ENCODE measurements at regions of chr3 and their contacts with region 1.

Region 1: DNA sequence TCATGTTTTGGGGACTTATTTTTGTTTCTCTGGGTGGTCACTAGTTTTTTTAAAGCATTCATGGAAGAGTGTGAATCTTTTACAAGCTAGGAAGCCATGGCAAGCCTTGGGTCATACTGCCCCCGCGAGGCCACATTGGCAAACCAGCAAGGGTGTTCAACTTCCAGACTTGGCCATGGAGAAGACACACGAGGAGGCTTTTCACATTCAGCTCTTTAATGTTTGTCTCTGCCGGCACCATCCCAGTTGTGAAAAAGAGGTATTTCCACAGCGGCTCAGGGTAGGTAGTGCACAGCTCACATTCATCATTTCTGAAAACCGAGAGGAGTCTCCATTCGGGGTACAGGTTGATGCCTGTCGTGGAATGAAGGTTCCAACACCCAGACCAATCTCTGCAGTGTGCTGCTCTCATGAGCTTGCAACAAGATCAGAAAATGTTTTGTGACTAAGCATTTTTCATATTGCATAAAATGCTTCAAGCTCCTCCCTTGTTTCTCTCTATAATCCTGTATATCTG is 7.7 kb downstream of the CCR5 start:
- DNase-seq: no peak
- H3K4me3 ChIP-seq: no peak overlapping the region
- H3K27ac ChIP-seq: no peak overlapping the region
- H3K4me1 ChIP-seq: peaks cover 4 to 9% (median 8%) of the 10 kb centered on the region in 4 donors
- H3K27me3 ChIP-seq: peaks cover 0 to 15% (median 0%) of the 10 kb centered on the region in 4 donors
- CTCF ChIP-seq: peak; percentile 27 to 37 (median 30)
- EP300 ChIP-seq: no peak
- POLR2A ChIP-seq: no peak

Region 2: DNA sequence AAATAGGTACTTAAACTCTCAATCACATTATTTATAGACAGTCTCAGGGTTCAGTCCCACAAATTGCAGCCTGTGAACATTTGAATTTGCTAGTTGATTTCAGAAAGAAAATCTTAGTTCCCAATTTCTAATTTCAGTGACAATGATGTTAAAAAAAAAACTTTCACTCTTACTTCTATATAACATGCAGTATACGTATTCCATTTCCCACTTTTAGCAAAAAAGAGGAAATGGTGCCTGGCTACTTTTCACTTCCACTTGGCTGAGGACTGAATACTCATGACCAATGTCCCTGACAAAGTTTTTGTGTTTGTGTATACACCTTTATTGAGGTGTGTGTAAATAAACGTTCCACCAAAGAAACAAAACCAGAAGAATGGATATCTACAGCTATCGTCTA is 319.1 kb before region 1 on chr3:
- intact Hi-C with region 1: no loop called
- DNase-seq: no peak
- H3K4me3 ChIP-seq: no peak overlapping the region
- H3K27ac ChIP-seq: no peak overlapping the region
- H3K4me1 ChIP-seq: peaks cover 8 to 10% (median 9%) of the 10 kb centered on the region in 4 donors
- H3K27me3 ChIP-seq: peaks cover 0 to 4% (median 0%) of the 10 kb centered on the region in 4 donors
- CTCF ChIP-seq: no peak
- EP300 ChIP-seq: no peak
- POLR2A ChIP-seq: no peak

Region 3: GRCh38 chr3:46089237-46090011 is 289.1 kb before region 1 on chr3:
- intact Hi-C with region 1: loop called (anchors 10 kb)
- DNase-seq: peak; percentile 93
- H3K4me3 ChIP-seq: no peak overlapping the region
- H3K27ac ChIP-seq: peak overlapping the region in 2 of 4 donors; percentile 38 to 48
- H3K4me1 ChIP-seq: peaks cover 0 to 9% (median 3%) of the 10 kb centered on the region in 4 donors
- H3K27me3 ChIP-seq: no peaks in the 10 kb centered on the region
- CTCF ChIP-seq: no peak
- EP300 ChIP-seq: no peak
- POLR2A ChIP-seq: no peak

Region 4: GRCh38 chr3:46214751-46215352 is 163.6 kb before region 1 on chr3:
- intact Hi-C with region 1: loop called (anchors 10 kb)
- DNase-seq: peak; percentile 12
- H3K4me3 ChIP-seq: no peak overlapping the region
- H3K27ac ChIP-seq: no peak overlapping the region
- H3K4me1 ChIP-seq: no peaks in the 10 kb centered on the region
- H3K27me3 ChIP-seq: peaks cover 0 to 12% (median 0%) of the 10 kb centered on the region in 4 donors
- CTCF ChIP-seq: no peak
- EP300 ChIP-seq: no peak
- POLR2A ChIP-seq: no peak